ENCODE measurements at regions of chr1 and their contacts with region 1.

Region 1: GRCh38 chr1:3491291-3492246 is 37.1 kb downstream of the ARHGEF16 start:
- DNase-seq: peak; percentile 95
- H3K4me3 ChIP-seq: peak overlapping the region; percentile 27 to 32; a peak in 3 of 4 replicates
- H3K27ac ChIP-seq: no peak overlapping the region
- H3K4me1 ChIP-seq: peaks cover 4% of the 10 kb centered on the region in 2 experiments; a peak in 1 of 4 replicates
- H3K27me3 ChIP-seq: no peaks in the 10 kb centered on the region
- CTCF ChIP-seq: peak; percentile 82
- EP300 ChIP-seq: no peak
- RAD21 ChIP-seq: peak; percentile 87

Region 2: DNA sequence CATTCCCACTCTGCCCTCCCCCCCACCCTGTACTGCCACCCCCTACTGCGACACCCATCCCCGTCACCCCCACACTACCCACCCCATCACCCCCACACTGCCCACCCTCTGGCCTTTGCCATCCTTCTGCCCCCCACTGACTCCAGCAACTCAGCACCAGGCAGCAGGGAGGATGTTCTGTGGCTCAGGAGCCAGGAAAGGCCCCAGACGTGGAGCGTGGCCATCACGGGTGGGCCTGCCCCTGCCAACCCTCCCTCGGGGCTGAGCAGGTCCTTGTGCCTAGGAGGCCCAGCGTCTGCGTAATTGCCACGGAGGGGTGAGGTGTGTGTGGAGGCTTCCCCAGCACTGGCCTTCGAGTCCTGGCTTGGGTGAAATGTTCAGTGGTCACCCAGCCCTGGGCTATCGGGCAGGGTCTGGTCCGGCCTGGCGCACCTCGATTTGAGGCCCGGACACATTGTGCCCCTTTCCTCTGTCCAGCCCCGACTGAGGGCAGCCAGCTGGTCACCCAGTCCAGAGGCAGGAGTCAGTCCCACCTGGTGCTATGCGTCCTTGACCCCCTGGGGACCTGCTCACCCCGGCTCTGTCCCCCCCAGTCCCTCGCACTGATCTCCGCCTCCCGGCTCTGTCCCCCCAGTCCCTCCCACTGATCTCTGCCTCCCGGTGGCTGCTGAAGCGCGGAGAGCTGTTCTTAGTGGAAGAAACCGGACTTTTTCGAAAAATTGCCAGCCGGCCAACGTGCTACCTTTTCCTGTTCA is 14.2 kb before region 1 on chr1:
- CTCF ChIA-PET with region 1: interaction called, 13 read pairs
- POLR2A ChIA-PET with region 1: no interaction called
- DNase-seq: peak; percentile 73
- H3K4me3 ChIP-seq: no peak overlapping the region
- H3K27ac ChIP-seq: no peak overlapping the region
- H3K4me1 ChIP-seq: peaks cover 0 to 2% of the 10 kb centered on the region in 2 experiments; a peak in 2 of 4 replicates
- H3K27me3 ChIP-seq: no peaks in the 10 kb centered on the region
- CTCF ChIP-seq: no peak
- EP300 ChIP-seq: no peak
- RAD21 ChIP-seq: no peak

Region 3: DNA sequence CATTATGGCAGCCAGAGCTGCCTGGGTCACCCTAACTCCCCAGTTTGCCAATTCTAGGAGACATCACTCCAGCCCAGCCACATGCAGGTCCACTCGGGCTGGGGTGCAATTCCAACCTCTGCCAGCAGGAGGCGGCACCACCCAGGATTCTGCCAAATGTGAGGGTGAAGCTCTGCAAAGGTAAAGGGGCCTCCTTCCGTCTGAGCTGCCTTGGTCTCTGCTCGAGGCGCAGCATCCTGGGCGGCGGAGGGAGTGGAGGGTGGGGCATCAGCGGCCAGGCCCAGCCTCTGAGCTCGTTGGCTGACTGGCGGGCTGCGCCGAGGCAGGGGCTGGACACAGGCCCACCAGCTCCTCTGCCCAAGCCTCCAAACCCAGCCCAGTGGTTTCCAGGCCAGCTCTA is 26.7 kb after region 1 on chr1:
- CTCF ChIA-PET with region 1: interaction called, 15 read pairs
- POLR2A ChIA-PET with region 1: interaction called, 3 read pairs
- DNase-seq: no peak
- H3K4me3 ChIP-seq: no peak overlapping the region; a peak in 1 of 4 replicates
- H3K27ac ChIP-seq: peak overlapping the region in 1 of 2 experiments; percentile 93; a peak in 2 of 4 replicates
- H3K4me1 ChIP-seq: peaks cover 0 to 56% of the 10 kb centered on the region in 2 experiments; a peak in 1 of 4 replicates
- H3K27me3 ChIP-seq: no peaks in the 10 kb centered on the region
- CTCF ChIP-seq: peak; percentile 59
- EP300 ChIP-seq: no peak
- RAD21 ChIP-seq: no peak

Region 4: DNA sequence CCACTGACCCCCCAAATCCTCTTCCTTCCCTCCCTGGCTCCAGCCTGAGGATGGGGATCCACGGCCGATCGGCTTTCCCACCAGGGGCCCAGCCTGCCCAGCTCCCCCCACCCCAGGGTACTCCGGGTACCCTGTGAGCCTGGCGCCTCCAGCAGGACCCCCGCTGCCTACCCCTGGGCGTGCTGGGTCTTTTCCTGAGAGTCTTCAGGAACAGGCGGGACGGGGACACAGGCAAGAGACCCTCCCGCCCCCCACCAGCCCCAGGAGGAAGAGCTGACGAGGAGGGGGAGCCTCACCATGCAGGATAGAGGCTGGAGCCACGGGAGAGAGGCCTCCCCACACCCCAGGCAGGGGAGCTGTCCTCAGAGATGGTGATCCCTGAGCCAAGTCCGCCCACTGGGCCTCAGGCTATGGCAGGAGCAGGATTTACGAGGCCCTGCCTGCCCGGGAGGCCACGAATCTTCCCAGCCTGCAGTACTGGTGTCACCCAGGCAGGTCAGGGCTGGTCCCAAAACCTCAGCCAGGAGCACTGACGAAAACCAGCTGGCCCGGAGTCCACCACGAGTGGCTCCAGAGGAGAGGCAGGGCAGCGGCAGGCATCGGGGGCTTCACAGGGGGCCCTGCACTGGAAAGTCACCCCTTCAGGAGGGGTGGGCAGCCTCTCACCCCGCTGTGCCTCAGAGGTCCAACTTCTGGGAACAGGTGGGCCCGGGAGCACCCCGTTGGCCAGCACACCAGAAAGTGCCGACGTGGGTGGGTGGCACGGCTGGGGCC is 61.8 kb after region 1 on chr1:
- CTCF ChIA-PET with region 1: interaction called, 18 read pairs
- POLR2A ChIA-PET with region 1: no interaction called
- DNase-seq: peak; percentile 76
- H3K4me3 ChIP-seq: no peak overlapping the region
- H3K27ac ChIP-seq: no peak overlapping the region; a peak in 1 of 4 replicates
- H3K4me1 ChIP-seq: peaks cover 0 to 58% of the 10 kb centered on the region in 2 experiments; a peak in 1 of 4 replicates
- H3K27me3 ChIP-seq: no peaks in the 10 kb centered on the region
- CTCF ChIP-seq: no peak
- EP300 ChIP-seq: no peak
- RAD21 ChIP-seq: no peak

Region 5: GRCh38 chr1:3577300-3577699 is 85.7 kb after region 1 on chr1:
- CTCF ChIA-PET with region 1: interaction called, 11 read pairs
- POLR2A ChIA-PET with region 1: no interaction called
- DNase-seq: peak; percentile 68
- H3K4me3 ChIP-seq: no peak overlapping the region
- H3K27ac ChIP-seq: peak overlapping the region in 1 of 2 experiments; percentile 82; a peak in 2 of 4 replicates
- H3K4me1 ChIP-seq: peaks cover 0 to 68% of the 10 kb centered on the region in 2 experiments; a peak in 1 of 4 replicates
- H3K27me3 ChIP-seq: no peaks in the 10 kb centered on the region
- CTCF ChIP-seq: no peak
- EP300 ChIP-seq: no peak
- RAD21 ChIP-seq: 0 out of 2 replicates have a peak, but pooled peaks have one; percentile 10

Region 6: GRCh38 chr1:3611170-3612019 is 119.8 kb after region 1 on chr1 and contains the start of gene MEGF6:
- CTCF ChIA-PET with region 1: interaction called, 18 read pairs
- POLR2A ChIA-PET with region 1: no interaction called
- DNase-seq: peak; percentile 99
- H3K4me3 ChIP-seq: peak within 1 kb of the TSS; percentile 26 to 54; a peak in 2 of 4 replicates
- H3K27ac ChIP-seq: no peak within 1 kb of the TSS
- H3K4me1 ChIP-seq: peaks cover 0 to 38% of the 10 kb centered on the region in 2 experiments; a peak in 2 of 4 replicates
- H3K27me3 ChIP-seq: no peaks in the 10 kb centered on the region
- CTCF ChIP-seq: no peak
- EP300 ChIP-seq: no peak
- RAD21 ChIP-seq: no peak
- polyA plus RNA-seq, gene MEGF6: 5.8 and 7.6 TPM in 2 replicates

Region 7: GRCh38 chr1:3631330-3632262 is 140.0 kb after region 1 on chr1:
- CTCF ChIA-PET with region 1: interaction called, 23 read pairs
- POLR2A ChIA-PET with region 1: no interaction called
- DNase-seq: no peak
- H3K4me3 ChIP-seq: no peak overlapping the region
- H3K27ac ChIP-seq: no peak overlapping the region; a peak in 1 of 4 replicates
- H3K4me1 ChIP-seq: peaks cover 0 to 19% of the 10 kb centered on the region in 2 experiments; a peak in 2 of 4 replicates
- H3K27me3 ChIP-seq: no peaks in the 10 kb centered on the region
- CTCF ChIP-seq: no peak
- EP300 ChIP-seq: no peak
- RAD21 ChIP-seq: no peak

Measured in SK-N-SH (cell line).